WTC11 (cell line): ENCODE measurements at regions of chr11 and their contacts with region 1.

Region 1: GRCh38 chr11:111982019-111982464 is 43.2 kb upstream of the DLAT start:
- DNase-seq: peak; percentile 83
- ATAC-seq: peak; percentile 62
- H3K4me3 Mint-ChIP-seq: peak overlapping the region; percentile 68
- H3K27ac Mint-ChIP-seq: peak overlapping the region; percentile 100
- H3K4me1 Mint-ChIP-seq: peaks cover 50% of the 10 kb centered on the region
- H3K27me3 Mint-ChIP-seq: no peaks in the 10 kb centered on the region
- CTCF ChIP-seq: peak; percentile 51

Region 2: GRCh38 chr11:111878849-111879636 is 103.0 kb before region 1 on chr11 and contains the starts of genes CFAP68 and FDXACB1:
- CTCF ChIA-PET with region 1: interaction called, 13 read pairs
- POLR2A ChIA-PET with region 1: no interaction called
- DNase-seq: peak; percentile 98
- ATAC-seq: peak; percentile 96
- H3K4me3 Mint-ChIP-seq: peak within 1 kb of the TSS; percentile 92
- H3K27ac Mint-ChIP-seq: peak within 1 kb of the TSS; percentile 100
- H3K4me1 Mint-ChIP-seq: peaks cover 6% of the 10 kb centered on the region
- H3K27me3 Mint-ChIP-seq: peaks cover 2% of the 10 kb centered on the region; the same call in 1 of the 2 replicates
- CTCF ChIP-seq: peak; percentile 89
- total RNA-seq, gene CFAP68: 18.7 to 22.6 TPM (median 20.4 TPM) in 3 replicates
- total RNA-seq, gene FDXACB1: 1.9 to 2.5 TPM (median 2.2 TPM) in 3 replicates

Region 3: DNA sequence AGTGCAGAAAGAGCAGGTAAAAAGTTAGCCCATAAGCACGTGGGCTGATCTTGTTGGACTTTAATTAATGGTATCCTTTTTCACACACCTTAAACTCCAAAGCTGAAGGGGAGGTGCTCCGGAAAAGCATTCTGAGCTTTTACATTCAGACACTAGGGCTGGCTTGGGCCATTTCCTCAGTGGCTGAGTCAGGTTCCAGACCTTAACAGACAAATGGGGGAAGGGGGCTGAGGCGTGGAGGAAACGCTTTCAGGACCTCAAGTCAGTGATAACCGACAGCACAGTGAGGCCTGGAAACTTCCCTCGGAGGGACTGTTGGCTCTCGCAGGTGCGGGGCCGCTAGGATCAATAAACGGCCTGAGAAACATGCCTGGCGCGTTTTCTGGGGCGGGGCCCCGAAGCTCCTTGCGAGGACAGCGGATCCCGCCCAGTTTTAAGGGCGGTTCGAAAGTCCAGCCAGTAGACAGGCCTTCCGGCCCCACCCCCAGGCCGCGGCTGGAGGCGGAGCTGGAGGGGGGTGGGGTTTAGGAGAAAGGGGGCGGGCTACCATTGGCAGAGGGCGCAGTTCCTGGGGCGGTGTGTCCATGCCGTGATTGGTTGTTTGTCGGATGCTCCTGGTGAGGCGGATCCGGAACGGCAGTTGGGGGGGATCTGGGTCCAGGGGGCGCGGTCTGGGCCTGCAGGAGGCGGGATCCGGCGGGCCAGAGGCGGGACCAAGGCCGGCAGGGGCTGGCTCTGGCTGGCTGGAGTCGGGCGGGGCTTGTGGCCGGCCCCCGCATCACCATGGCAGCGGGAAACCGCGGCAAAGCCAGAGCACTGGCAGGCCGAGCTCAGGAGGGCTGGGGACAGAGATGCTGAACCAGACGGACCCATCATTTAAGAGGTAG is 55.3 kb before region 1 on chr11:
- CTCF ChIA-PET with region 1: interaction called, 159 read pairs
- POLR2A ChIA-PET with region 1: interaction called, 21 read pairs
- DNase-seq: peak; percentile 97
- ATAC-seq: peak; percentile 94
- H3K4me3 Mint-ChIP-seq: peak overlapping the region; percentile 74
- H3K27ac Mint-ChIP-seq: peak overlapping the region; percentile 96
- H3K4me1 Mint-ChIP-seq: peaks cover 28% of the 10 kb centered on the region
- H3K27me3 Mint-ChIP-seq: no peaks in the 10 kb centered on the region
- CTCF ChIP-seq: no peak

Region 4: GRCh38 chr11:111938687-111939160 is 43.3 kb before region 1 on chr11:
- CTCF ChIA-PET with region 1: interaction called, 121 read pairs
- POLR2A ChIA-PET with region 1: interaction called, 13 read pairs
- DNase-seq: peak; percentile 40
- ATAC-seq: peak; percentile 36
- H3K4me3 Mint-ChIP-seq: peak overlapping the region; percentile 68
- H3K27ac Mint-ChIP-seq: peak overlapping the region; percentile 76
- H3K4me1 Mint-ChIP-seq: peaks cover 46% of the 10 kb centered on the region
- H3K27me3 Mint-ChIP-seq: no peaks in the 10 kb centered on the region; the same call in 1 of the 2 replicates
- CTCF ChIP-seq: no peak

Region 5: GRCh38 chr11:111960916-111961315 is 21.1 kb before region 1 on chr11:
- CTCF ChIA-PET with region 1: interaction called, 53 read pairs
- POLR2A ChIA-PET with region 1: interaction called, 8 read pairs
- DNase-seq: peak; percentile 57
- ATAC-seq: peak; percentile 98
- H3K4me3 Mint-ChIP-seq: peak overlapping the region; percentile 39
- H3K27ac Mint-ChIP-seq: peak overlapping the region; percentile 86
- H3K4me1 Mint-ChIP-seq: peaks cover 32% of the 10 kb centered on the region
- H3K27me3 Mint-ChIP-seq: no peaks in the 10 kb centered on the region
- CTCF ChIP-seq: no peak